Heart left ventricle (tissue), 16 donors: ENCODE measurements at regions of chr14 and their contacts with region 1.

Region 1: DNA sequence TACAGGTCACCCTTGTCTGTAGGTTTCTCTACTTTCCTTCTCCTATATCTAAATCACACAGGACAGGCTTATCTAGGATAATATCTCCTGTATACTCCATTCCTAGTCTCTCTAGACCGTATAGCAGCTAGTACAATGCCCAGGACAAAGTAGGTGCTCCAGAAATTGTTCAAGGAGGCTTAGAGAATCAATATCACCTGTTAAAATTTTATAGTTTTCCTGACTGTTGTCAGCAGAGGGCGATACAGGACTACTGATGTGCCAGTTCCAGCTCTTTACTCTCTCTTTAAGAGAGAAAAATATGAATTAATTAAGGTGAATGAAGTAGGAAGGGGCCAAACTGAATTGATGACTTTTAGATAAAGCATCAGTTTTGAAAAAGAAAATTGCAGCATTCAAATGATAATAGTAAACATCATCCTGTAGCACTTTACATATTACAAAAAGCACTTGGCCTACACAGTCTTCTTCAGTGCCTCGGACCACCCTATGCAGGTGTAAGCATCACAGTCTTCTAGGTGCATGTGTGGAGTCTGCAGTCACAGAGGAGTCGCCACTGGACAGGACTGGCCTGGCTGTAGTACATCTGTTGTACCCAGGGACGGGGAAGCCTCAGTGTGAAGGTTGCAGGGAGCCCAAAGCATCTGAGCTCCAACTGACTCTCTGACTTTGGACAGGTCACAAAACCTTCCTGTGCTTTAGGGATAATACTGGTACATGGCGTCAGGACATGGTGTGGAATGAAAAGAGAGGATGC is 61.9 kb upstream of the MAX start:
- DNase-seq: no peak
- ATAC-seq: peak in 3 of 4 donors; percentile 47 to 59 (median 48)
- H3K4me3 ChIP-seq: no peak overlapping the region
- H3K27ac ChIP-seq: no peak overlapping the region
- H3K4me1 ChIP-seq: peaks cover 0 to 2% (median 0%) of the 10 kb centered on the region in 12 donors
- H3K27me3 ChIP-seq: no peaks in the 10 kb centered on the region
- CTCF ChIP-seq: peak; percentile 45 to 81 (median 64)
- POLR2A ChIP-seq: no peak

Region 2: GRCh38 chr14:65373679-65374039 is 209.4 kb after region 1 on chr14:
- intact Hi-C with region 1: loop called in 1 of 10 experiments (anchors 10 kb)
- DNase-seq: peak in 1 of 5 donors; percentile 19
- ATAC-seq: peak in 1 of 4 donors; percentile 44
- H3K4me3 ChIP-seq: no peak overlapping the region
- H3K27ac ChIP-seq: no peak overlapping the region
- H3K4me1 ChIP-seq: peaks cover 0 to 7% (median 0%) of the 10 kb centered on the region in 12 donors
- H3K27me3 ChIP-seq: peaks cover 0 to 4% (median 0%) of the 10 kb centered on the region in 9 donors
- CTCF ChIP-seq: peak in 1 of 12 donors; percentile 3
- POLR2A ChIP-seq: no peak

Region 3: GRCh38 chr14:65403231-65403630 is 239.0 kb after region 1 on chr14:
- intact Hi-C with region 1: loop called in 1 of 10 experiments (anchors 10 kb)
- DNase-seq: no peak
- ATAC-seq: no peak
- H3K4me3 ChIP-seq: no peak overlapping the region
- H3K27ac ChIP-seq: no peak overlapping the region
- H3K4me1 ChIP-seq: no peaks in the 10 kb centered on the region
- H3K27me3 ChIP-seq: no peaks in the 10 kb centered on the region
- CTCF ChIP-seq: no peak
- POLR2A ChIP-seq: no peak

Region 4: GRCh38 chr14:65824285-65824977 is 660.2 kb after region 1 on chr14:
- intact Hi-C with region 1: loop called (anchors 1 to 5 kb)
- DNase-seq: peak in 2 of 5 donors; percentile 30 to 41
- ATAC-seq: peak in 3 of 4 donors; percentile 76 to 82 (median 80)
- H3K4me3 ChIP-seq: no peak overlapping the region
- H3K27ac ChIP-seq: no peak overlapping the region
- H3K4me1 ChIP-seq: no peaks in the 10 kb centered on the region
- H3K27me3 ChIP-seq: peaks cover 0 to 12% (median 6%) of the 10 kb centered on the region in 9 donors
- CTCF ChIP-seq: peak; percentile 86 to 96 (median 90)
- POLR2A ChIP-seq: no peak

Region 5: DNA sequence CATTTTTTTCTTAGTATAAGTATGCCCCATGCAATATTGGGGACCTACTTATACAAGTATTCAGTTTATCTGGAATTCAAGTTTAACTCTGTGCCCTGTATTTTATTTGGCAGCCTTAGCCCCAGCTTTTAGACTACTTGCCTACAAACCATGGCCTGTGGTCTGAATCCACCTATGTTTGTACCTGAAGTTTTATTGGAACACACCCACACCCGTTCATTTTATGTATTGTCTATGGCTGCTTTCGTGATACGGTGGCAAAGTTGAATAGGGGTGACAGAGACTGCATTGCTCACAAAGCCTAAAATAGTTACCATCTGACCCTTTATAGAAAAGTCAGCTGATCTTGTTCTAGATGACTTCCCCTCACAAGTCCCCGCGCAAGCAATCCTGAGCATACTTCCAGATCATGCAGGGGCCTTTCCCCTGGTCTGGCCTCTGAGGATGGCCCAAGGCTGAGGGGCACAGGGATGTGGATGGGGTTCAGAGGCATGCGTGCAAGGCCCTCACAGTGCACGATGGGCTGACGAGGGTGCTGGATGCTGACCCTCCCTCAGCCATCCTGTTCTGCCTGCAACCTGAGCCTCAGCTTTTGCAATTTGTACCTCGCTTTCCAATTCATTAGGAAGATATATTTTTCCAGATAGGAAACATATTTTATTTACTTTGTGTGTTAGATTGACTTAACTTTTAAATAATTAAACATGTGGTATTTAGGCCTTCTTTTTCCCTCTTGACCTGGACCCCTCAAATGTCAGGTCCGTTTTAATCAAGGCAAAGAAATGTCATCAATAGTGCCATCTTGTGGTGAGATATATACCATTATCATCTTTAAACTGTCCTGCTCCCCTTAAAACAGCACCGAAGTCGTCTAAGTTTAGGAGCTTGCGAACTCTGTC is 794.7 kb after region 1 on chr14:
- intact Hi-C with region 1: loop called in 9 of 10 experiments (anchors 2 to 10 kb)
- DNase-seq: no peak
- ATAC-seq: peak in 2 of 4 donors; percentile 53 to 58
- H3K4me3 ChIP-seq: no peak overlapping the region
- H3K27ac ChIP-seq: no peak overlapping the region
- H3K4me1 ChIP-seq: peaks cover 0 to 6% (median 0%) of the 10 kb centered on the region in 12 donors
- H3K27me3 ChIP-seq: peaks cover 0 to 6% (median 0%) of the 10 kb centered on the region in 9 donors
- CTCF ChIP-seq: peak; percentile 31 to 62 (median 50)
- POLR2A ChIP-seq: no peak

Region 6: GRCh38 chr14:66070509-66071319 is 906.5 kb after region 1 on chr14:
- intact Hi-C with region 1: loop called in 2 of 10 experiments (anchors 5 kb)
- DNase-seq: peak in 2 of 5 donors; percentile 18 to 34
- ATAC-seq: peak in 3 of 4 donors; percentile 49 to 67 (median 58)
- H3K4me3 ChIP-seq: no peak overlapping the region
- H3K27ac ChIP-seq: no peak overlapping the region
- H3K4me1 ChIP-seq: no peaks in the 10 kb centered on the region
- H3K27me3 ChIP-seq: peaks cover 0 to 4% (median 0%) of the 10 kb centered on the region in 9 donors
- CTCF ChIP-seq: peak; percentile 63 to 85 (median 76)
- POLR2A ChIP-seq: no peak

Region 7: GRCh38 chr14:66078006-66078405 is 913.8 kb after region 1 on chr14:
- intact Hi-C with region 1: loop called in 2 of 10 experiments (anchors 5 kb)
- DNase-seq: no peak
- ATAC-seq: no peak
- H3K4me3 ChIP-seq: no peak overlapping the region
- H3K27ac ChIP-seq: no peak overlapping the region
- H3K4me1 ChIP-seq: peaks cover 0 to 9% (median 0%) of the 10 kb centered on the region in 12 donors
- H3K27me3 ChIP-seq: peaks cover 0 to 4% (median 0%) of the 10 kb centered on the region in 9 donors
- CTCF ChIP-seq: no peak
- POLR2A ChIP-seq: no peak